AG04449 (cell line): ENCODE measurements at regions of chr3 and their contacts with region 1.

Region 1: DNA sequence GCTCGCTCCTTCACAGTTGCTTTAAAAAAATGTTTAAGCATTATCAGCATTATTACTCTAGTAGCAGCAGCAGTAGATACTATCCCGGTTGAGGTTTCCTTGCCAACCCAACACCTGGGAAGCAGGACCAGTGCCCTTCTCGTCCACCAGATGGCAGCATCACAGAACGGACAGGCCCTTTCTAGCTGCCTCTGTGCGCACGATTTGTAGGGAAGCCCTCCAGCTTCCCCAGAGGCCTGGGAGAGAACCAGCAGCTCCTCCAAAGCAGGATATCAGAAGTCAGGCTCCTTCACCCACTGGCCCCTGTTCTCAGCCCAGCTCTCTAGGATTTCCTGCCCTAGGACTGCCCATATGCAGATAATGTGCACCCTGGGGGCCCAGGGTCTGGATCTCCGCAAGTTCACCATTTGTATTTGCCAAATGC is 16.8 kb upstream of the ESYT3 start:
- DNase-seq: no peak
- H3K4me3 ChIP-seq: no peak overlapping the region
- CTCF ChIP-seq: peak; percentile 96

Region 2: DNA sequence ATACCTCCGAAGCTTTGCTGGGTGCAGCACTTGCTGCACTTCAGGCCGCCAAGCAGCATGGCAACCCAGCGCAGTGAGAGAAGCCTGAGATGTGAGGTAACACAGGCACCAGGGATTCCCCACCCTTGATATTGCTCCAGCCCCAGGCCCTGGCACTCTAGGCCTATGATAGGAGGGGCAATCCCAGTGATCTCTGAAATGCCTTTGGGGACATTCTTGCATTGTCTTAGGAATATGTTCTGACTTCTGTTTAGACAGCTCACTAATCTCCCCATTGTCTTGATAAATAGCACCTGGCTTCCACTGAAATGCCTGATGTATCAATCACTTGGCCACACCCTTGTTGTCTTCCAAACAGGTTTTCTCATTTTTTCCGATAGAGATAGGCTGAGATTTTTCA is 550.6 kb before region 1 on chr3:
- CTCF ChIA-PET with region 1: no interaction called
- POLR2A ChIA-PET with region 1: no interaction called
- DNase-seq: no peak
- H3K4me3 ChIP-seq: no peak overlapping the region
- CTCF ChIP-seq: no peak

Region 3: DNA sequence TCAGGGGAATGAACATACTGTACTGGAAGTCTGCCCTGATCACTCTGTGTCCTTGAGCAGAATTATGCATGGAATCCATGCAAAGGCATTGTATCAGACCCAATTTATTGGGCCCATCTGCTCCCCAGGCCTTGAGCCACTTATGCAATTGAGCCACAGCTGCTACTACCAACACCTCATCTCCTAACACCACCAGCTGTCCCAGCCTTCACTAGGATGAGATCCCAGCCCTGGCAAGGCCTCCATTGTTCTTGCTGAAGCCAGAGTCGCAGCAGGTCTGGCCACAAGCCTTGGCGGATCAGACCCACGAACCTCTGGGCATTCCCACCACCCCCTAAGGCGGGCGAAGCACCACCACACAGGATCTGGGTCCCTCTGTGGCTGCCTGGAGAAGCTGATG is 78.8 kb before region 1 on chr3:
- CTCF ChIA-PET with region 1: interaction called, 23 read pairs
- POLR2A ChIA-PET with region 1: no interaction called
- DNase-seq: no peak
- H3K4me3 ChIP-seq: no peak overlapping the region
- CTCF ChIP-seq: no peak

Region 4: GRCh38 chr3:138375447-138375846 is 42.1 kb before region 1 on chr3:
- CTCF ChIA-PET with region 1: interaction called, 12 read pairs
- POLR2A ChIA-PET with region 1: no interaction called
- DNase-seq: no peak
- H3K4me3 ChIP-seq: no peak overlapping the region
- CTCF ChIP-seq: no peak

Region 5: DNA sequence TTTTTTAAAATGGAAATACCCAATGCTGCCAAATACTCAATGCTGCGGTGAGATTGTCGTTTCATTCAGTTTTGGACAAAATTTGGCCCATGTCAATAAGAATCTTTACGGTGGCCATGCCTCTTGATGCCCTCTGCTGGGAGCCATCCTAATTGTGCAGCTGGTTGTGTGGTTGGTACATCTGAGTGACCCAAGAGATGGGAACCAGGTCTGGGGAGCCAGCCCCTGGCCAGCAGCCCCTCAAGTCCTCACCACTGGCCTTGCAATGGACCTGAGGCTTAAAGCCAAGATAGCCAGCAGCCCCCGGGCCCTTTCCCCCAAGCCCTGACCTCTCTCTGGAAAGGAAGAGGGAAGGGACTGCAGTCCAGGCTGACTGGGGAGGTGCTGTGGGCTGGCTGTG is 19.6 kb before region 1 on chr3:
- CTCF ChIA-PET with region 1: interaction called, 170 read pairs
- POLR2A ChIA-PET with region 1: no interaction called
- DNase-seq: no peak
- H3K4me3 ChIP-seq: no peak overlapping the region
- CTCF ChIP-seq: peak; percentile 11

Region 6: GRCh38 chr3:138442433-138442832 is 24.9 kb after region 1 on chr3:
- CTCF ChIA-PET with region 1: interaction called, 64 read pairs
- POLR2A ChIA-PET with region 1: interaction called, 3 read pairs
- DNase-seq: no peak
- H3K4me3 ChIP-seq: no peak overlapping the region
- CTCF ChIP-seq: no peak

Region 7: GRCh38 chr3:138479438-138479863 is 61.9 kb after region 1 on chr3:
- CTCF ChIA-PET with region 1: interaction called, 10 read pairs
- POLR2A ChIA-PET with region 1: no interaction called
- DNase-seq: no peak
- H3K4me3 ChIP-seq: no peak overlapping the region
- CTCF ChIP-seq: peak; percentile 90

Region 8: GRCh38 chr3:138923531-138923994 is 506.0 kb after region 1 on chr3:
- CTCF ChIA-PET with region 1: interaction called, 83 read pairs
- POLR2A ChIA-PET with region 1: no interaction called
- DNase-seq: no peak
- H3K4me3 ChIP-seq: no peak overlapping the region
- CTCF ChIP-seq: peak; percentile 85